HCT116 (cell line): ENCODE measurements at regions of chr11 and their contacts with region 1.

Region 1: GRCh38 chr11:18731949-18732821 is 6.2 kb upstream of the IGSF22 start:
- DNase-seq: peak; percentile 19
- ATAC-seq: peak; percentile 74
- H3K4me3 ChIP-seq: no peak overlapping the region
- H3K27ac ChIP-seq: no peak overlapping the region
- H3K4me1 ChIP-seq: peaks cover 0 to 7% of the 10 kb centered on the region in 2 experiments; a peak in 2 of 4 replicates
- H3K27me3 ChIP-seq: no peaks in the 10 kb centered on the region
- CTCF ChIP-seq: peak; percentile 80 to 99 (median 99)
- POLR2A ChIP-seq: no peak
- RAD21 ChIP-seq: peak; percentile 81

Region 2: GRCh38 chr11:18243783-18244362 is 488.3 kb before region 1 on chr11:
- CTCF ChIA-PET with region 1: interaction called, 5 read pairs
- POLR2A ChIA-PET with region 1: no interaction called
- RAD21 ChIA-PET with region 1: no interaction called
- intact Hi-C with region 1: loop called (anchors 2 kb)
- DNase-seq: peak; percentile 63
- ATAC-seq: peak; percentile 87
- H3K4me3 ChIP-seq: no peak overlapping the region
- H3K27ac ChIP-seq: no peak overlapping the region
- H3K4me1 ChIP-seq: no peaks in the 10 kb centered on the region; a peak in 1 of 4 replicates
- H3K27me3 ChIP-seq: no peaks in the 10 kb centered on the region
- CTCF ChIP-seq: peak; percentile 65 to 94 (median 80); a peak in 5 of 6 replicates
- POLR2A ChIP-seq: no peak
- RAD21 ChIP-seq: peak; percentile 85

Region 3: GRCh38 chr11:18502352-18502751 is 229.8 kb before region 1 on chr11:
- CTCF ChIA-PET with region 1: no interaction called
- POLR2A ChIA-PET with region 1: no interaction called
- RAD21 ChIA-PET with region 1: no interaction called
- intact Hi-C with region 1: no loop called
- DNase-seq: no peak
- ATAC-seq: no peak
- H3K4me3 ChIP-seq: no peak overlapping the region
- H3K27ac ChIP-seq: no peak overlapping the region
- H3K4me1 ChIP-seq: no peaks in the 10 kb centered on the region
- H3K27me3 ChIP-seq: no peaks in the 10 kb centered on the region
- CTCF ChIP-seq: no peak
- POLR2A ChIP-seq: no peak
- RAD21 ChIP-seq: no peak

Region 4: GRCh38 chr11:18721561-18722292 is 10.5 kb before region 1 on chr11:
- CTCF ChIA-PET with region 1: interaction called, 11 read pairs
- POLR2A ChIA-PET with region 1: no interaction called
- RAD21 ChIA-PET with region 1: no interaction called
- intact Hi-C with region 1: no loop called
- DNase-seq: peak; percentile 45
- ATAC-seq: peak; percentile 80
- H3K4me3 ChIP-seq: peak overlapping the region; percentile 51 to 63
- H3K27ac ChIP-seq: peak overlapping the region; percentile 38; the same call in 1 of the 2 replicates
- H3K4me1 ChIP-seq: peaks cover 0 to 12% of the 10 kb centered on the region in 2 experiments; a peak in 1 of 4 replicates
- H3K27me3 ChIP-seq: no peaks in the 10 kb centered on the region
- CTCF ChIP-seq: peak; percentile 32 to 82 (median 75); a peak in 5 of 6 replicates
- POLR2A ChIP-seq: no peak
- RAD21 ChIP-seq: peak; percentile 41; the same call in 1 of the 2 replicates

Region 5: DNA sequence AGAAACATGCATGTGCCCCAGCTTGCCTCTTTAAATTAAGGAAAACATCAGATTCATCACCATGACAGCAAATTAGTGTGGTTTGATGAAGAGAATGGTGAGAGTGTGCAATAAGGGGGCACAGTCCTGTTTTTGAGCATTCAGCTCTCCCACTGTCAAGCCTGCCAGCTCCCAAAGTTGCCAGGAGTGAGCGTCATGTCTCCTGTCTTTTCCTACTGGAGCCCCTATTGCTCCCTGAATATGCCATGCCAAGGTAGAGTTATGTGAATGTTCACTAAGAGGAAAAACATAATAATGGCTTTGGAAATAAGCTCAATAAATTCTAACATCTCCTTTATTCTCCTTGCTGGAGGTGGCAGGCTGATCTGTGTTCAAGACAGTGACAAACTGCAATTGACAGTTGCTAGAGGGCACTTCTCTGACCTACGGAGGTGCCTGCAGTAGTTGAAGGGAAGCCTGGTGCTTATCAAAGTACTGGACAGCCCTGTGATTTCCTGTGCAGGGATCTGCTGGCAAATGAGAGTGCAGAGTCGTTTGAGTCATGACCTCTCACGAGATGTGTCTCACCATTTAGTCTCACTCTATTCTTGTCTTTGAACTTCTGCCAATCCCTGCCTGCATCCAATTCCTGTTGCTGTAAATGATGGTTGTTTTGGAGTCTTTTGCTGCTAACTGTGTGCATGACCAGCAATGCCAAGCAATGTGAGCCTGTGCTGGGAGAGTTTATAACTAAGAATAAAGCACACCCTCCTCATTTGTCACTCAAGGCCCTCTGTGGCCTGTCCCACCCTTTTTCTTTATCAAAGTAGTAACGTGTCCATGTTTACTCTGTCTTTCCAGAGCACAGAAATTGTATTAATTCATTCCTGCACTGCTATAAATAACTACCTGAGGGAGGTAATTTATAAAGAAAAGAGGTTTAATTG is 293.6 kb after region 1 on chr11:
- CTCF ChIA-PET with region 1: no interaction called
- POLR2A ChIA-PET with region 1: no interaction called
- RAD21 ChIA-PET with region 1: no interaction called
- intact Hi-C with region 1: no loop called
- DNase-seq: no peak
- ATAC-seq: no peak
- H3K4me3 ChIP-seq: no peak overlapping the region
- H3K27ac ChIP-seq: no peak overlapping the region
- H3K4me1 ChIP-seq: peaks cover 0 to 6% of the 10 kb centered on the region in 2 experiments; a peak in 1 of 4 replicates
- H3K27me3 ChIP-seq: peaks cover 80% of the 10 kb centered on the region
- CTCF ChIP-seq: no peak
- POLR2A ChIP-seq: no peak
- RAD21 ChIP-seq: no peak

Region 6: DNA sequence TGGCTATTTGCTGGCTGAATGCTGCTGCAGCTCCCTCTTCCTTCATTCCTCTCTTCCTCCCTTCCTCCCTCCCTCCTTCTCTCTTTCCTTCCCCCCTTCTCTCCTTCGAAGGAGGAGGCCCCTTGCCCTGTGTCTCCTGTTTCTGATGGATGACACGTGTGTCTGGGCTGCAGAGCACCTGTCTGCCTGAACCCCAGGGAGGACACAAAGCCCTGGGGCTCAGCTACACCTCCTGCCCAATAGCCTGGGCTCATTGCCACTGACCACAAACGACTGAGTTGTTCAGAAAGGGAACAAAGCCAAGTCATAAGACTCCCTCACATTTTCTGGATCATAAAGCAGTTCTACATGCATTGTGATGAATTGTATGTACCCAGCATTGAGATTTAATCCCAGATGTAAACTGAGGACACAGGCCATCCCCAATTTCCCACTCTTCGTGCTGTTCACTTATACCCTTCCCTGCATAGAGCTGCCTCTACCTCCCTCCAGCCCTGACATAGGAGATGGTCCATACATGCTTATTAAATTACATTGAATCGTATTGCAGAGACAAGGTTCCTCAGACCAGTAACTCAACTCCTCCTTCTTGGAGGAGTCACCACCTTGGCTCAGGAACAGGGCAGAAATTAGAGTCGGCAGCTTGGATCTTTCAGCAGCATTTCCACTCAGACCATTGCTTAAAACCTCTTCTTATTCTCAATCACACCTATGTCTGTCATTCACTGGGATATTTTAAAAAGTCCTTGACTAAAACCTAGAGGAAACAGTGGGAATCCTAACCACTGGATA is 468.4 kb after region 1 on chr11:
- CTCF ChIA-PET with region 1: no interaction called
- POLR2A ChIA-PET with region 1: no interaction called
- RAD21 ChIA-PET with region 1: no interaction called
- intact Hi-C with region 1: no loop called
- DNase-seq: no peak
- ATAC-seq: no peak
- H3K4me3 ChIP-seq: no peak overlapping the region
- H3K27ac ChIP-seq: no peak overlapping the region
- H3K4me1 ChIP-seq: peaks cover 3 to 5% of the 10 kb centered on the region in 2 experiments; a peak in 1 of 4 replicates
- H3K27me3 ChIP-seq: peaks cover 6% of the 10 kb centered on the region; the same call in 1 of the 2 replicates
- CTCF ChIP-seq: no peak
- POLR2A ChIP-seq: no peak
- RAD21 ChIP-seq: no peak